Aorta (tissue), 5 donors: ENCODE measurements at regions of chr4 and their contacts with region 1.

Region 1: GRCh38 chr4:147096667-147097604 is 151.3 kb upstream of the TTC29 start:
- DNase-seq: no peak
- ATAC-seq: peak; percentile 76
- H3K4me3 ChIP-seq: no peak overlapping the region
- H3K27ac ChIP-seq: no peak overlapping the region
- H3K4me1 ChIP-seq: peaks cover 0 to 2% of the 10 kb centered on the region in 2 donors
- H3K27me3 ChIP-seq: no peaks in the 10 kb centered on the region

Region 2: GRCh38 chr4:146342600-146343192 is 754.2 kb before region 1 on chr4:
- intact Hi-C with region 1: loop called (anchors 5 kb)
- DNase-seq: no peak
- ATAC-seq: no peak
- H3K4me3 ChIP-seq: no peak overlapping the region
- H3K27ac ChIP-seq: no peak overlapping the region
- H3K4me1 ChIP-seq: no peaks in the 10 kb centered on the region
- H3K27me3 ChIP-seq: no peaks in the 10 kb centered on the region

Region 3: DNA sequence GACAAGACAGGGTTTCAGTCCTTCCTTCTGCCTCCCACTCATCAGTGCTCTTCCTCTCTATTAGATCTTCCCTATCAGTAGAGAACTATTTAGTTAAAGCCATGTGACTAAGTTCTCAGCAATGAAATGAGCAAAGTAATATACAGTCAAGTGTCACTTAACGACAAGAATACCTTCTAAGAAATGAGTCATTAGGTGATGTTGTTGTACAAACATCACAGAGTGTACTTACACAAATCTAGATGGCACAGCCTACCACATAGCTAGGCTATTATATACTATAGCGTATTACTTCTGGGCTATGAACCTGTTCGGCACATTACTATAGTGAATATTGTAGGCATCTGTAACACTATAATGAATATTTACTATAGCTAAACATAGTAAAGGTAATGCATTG is 387.0 kb before region 1 on chr4:
- intact Hi-C with region 1: no loop called
- DNase-seq: no peak
- ATAC-seq: no peak
- H3K4me3 ChIP-seq: no peak overlapping the region
- H3K27ac ChIP-seq: no peak overlapping the region
- H3K4me1 ChIP-seq: no peaks in the 10 kb centered on the region
- H3K27me3 ChIP-seq: no peaks in the 10 kb centered on the region

Region 4: DNA sequence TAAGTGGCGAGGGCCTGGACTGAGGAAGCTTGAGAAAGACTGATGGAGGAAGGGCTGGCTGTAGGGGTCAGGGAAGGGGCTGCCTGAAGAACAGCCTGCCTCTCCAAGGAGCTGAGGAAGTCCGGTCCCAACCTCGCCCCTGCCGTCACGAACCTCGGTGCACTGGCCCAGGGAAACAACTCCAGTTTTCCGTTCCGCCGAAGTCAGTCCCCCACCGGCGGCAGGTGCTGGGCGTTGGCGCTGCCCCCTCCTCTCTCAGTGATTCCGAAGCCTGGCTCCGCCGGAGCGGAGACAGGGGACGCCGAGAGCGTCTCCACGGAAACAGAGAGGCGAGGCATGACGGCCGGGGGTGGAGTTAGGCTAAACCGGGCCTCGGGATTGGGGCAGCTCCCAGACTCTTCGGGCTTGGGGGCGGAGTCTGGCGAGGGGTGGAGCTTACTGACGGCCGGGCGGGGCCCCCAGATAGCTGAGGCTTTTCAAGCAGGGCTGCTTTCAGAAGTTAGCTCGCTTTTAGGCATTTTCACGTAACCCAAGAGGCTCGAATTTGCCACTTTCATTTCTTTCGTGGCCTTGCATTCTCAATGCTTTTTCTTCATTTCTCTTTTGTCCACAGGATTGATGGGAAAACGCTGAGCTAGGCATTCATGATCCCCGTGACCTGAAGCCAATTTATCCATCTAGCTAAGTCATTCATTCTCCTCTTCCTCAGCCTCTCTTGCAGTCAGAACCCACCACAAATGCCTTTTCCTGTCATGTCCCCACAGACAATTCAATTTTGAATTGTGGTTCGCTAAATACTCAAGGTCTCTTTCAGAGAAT is 151.2 kb before region 1 on chr4 and contains the start of gene TTC29:
- intact Hi-C with region 1: loop called in 1 of 2 experiments (anchors 10 kb)
- DNase-seq: peak; percentile 94 to 97
- ATAC-seq: peak; percentile 96
- H3K4me3 ChIP-seq: peak within 1 kb of the TSS; percentile 6 to 22
- H3K27ac ChIP-seq: no peak within 1 kb of the TSS
- H3K4me1 ChIP-seq: peaks cover 0 to 3% of the 10 kb centered on the region in 2 donors
- H3K27me3 ChIP-seq: no peaks in the 10 kb centered on the region
- total RNA-seq, gene TTC29: not detected

Region 5: DNA sequence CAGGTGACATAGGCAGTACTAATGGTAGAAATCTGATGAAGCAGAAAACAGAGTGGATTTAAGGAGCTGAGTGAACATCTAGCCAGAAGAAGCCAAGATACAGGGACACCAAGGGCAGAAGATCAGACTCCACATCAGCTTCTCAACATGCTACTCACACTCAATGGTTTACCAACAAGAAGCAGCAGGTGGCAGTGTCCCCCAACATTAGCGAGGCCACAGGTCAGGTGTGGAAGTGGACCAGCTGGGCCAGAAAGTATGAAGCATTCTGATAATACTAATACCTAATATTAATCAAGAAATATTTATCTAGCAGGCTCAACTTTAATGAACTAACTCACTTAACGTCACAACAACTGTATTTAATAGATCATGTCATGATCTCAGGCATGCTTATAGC is 77.9 kb before region 1 on chr4:
- intact Hi-C with region 1: loop called (anchors 2 to 5 kb)
- DNase-seq: peak; percentile 74 to 83
- ATAC-seq: peak; percentile 73
- H3K4me3 ChIP-seq: no peak overlapping the region
- H3K27ac ChIP-seq: no peak overlapping the region
- H3K4me1 ChIP-seq: no peaks in the 10 kb centered on the region
- H3K27me3 ChIP-seq: no peaks in the 10 kb centered on the region